PC-9 (cell line): ENCODE measurements at regions of chr1 and their contacts with region 1.

Region 1: GRCh38 chr1:8015036-8015808 is 10.9 kb downstream of the ERRFI1 start:
- DNase-seq: peak; percentile 58 to 72
- H3K4me3 ChIP-seq: peak overlapping the region; percentile 91; the same call in 1 of the 2 replicates
- H3K27ac ChIP-seq: peak overlapping the region; percentile 90
- H3K4me1 ChIP-seq: peaks cover 75% of the 10 kb centered on the region
- H3K27me3 ChIP-seq: no peaks in the 10 kb centered on the region
- CTCF ChIP-seq: peak; percentile 70

Region 2: DNA sequence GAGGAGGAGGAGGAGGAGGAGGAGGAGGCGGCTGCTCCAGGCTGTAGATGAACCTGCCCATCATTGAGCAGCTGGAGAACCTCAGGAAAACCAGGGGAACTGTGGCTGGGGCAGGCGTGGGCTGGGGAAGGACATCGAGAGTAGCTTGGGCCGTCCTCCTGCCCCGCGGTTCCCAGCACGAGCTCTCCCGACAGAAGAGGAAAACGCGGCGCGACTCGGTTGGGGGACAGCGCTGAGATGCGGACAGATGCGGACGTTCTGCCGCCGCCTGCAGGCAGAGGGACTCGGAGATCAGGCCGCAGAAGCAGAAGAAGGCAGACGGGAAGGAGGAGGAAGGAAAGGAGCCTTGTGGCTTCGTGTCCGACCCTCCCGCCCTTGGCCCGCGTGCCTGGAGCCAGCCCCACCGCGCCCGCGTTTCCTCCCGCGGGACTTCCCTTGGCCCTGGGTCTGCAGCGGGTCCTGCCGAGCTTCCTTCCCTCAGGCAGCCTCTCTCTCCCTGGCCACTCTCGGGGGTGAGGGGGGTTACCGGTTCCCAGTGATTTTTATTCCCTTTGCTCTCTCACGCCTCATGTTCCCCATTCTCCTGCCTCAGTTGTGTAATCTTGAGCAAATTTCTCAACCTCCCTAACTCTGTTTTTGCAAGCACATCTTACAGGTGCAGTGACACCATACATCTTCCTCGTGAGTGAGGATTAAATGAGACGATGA is 72.9 kb before region 1 on chr1:
- CTCF ChIA-PET with region 1: no interaction called
- POLR2A ChIA-PET with region 1: no interaction called
- intact Hi-C with region 1: no loop called
- DNase-seq: no peak
- H3K4me3 ChIP-seq: no peak overlapping the region
- H3K27ac ChIP-seq: no peak overlapping the region
- H3K4me1 ChIP-seq: peaks cover 14% of the 10 kb centered on the region
- H3K27me3 ChIP-seq: no peaks in the 10 kb centered on the region
- CTCF ChIP-seq: no peak

Region 3: GRCh38 chr1:8004803-8005554 is 10.2 kb before region 1 on chr1:
- CTCF ChIA-PET with region 1: no interaction called
- POLR2A ChIA-PET with region 1: interaction called, 10 read pairs
- intact Hi-C with region 1: no loop called
- DNase-seq: peak; percentile 70 to 91
- H3K4me3 ChIP-seq: no peak overlapping the region
- H3K27ac ChIP-seq: peak overlapping the region; percentile 83
- H3K4me1 ChIP-seq: peaks cover 31% of the 10 kb centered on the region
- H3K27me3 ChIP-seq: no peaks in the 10 kb centered on the region
- CTCF ChIP-seq: no peak

Region 4: GRCh38 chr1:8040586-8040985 is 25.4 kb after region 1 on chr1:
- CTCF ChIA-PET with region 1: interaction called, 3 read pairs
- POLR2A ChIA-PET with region 1: interaction called, 24 read pairs
- intact Hi-C with region 1: no loop called
- DNase-seq: peak; percentile 82 to 90
- H3K4me3 ChIP-seq: no peak overlapping the region
- H3K27ac ChIP-seq: peak overlapping the region; percentile 76
- H3K4me1 ChIP-seq: peaks cover 32% of the 10 kb centered on the region
- H3K27me3 ChIP-seq: no peaks in the 10 kb centered on the region
- CTCF ChIP-seq: no peak

Region 5: GRCh38 chr1:8113262-8114220 is 98.3 kb after region 1 on chr1:
- CTCF ChIA-PET with region 1: no interaction called
- POLR2A ChIA-PET with region 1: no interaction called
- intact Hi-C with region 1: no loop called
- DNase-seq: no peak
- H3K4me3 ChIP-seq: no peak overlapping the region
- H3K27ac ChIP-seq: no peak overlapping the region
- H3K4me1 ChIP-seq: peaks cover 36% of the 10 kb centered on the region
- H3K27me3 ChIP-seq: no peaks in the 10 kb centered on the region
- CTCF ChIP-seq: no peak

Region 6: GRCh38 chr1:8238851-8239305 is 223.7 kb after region 1 on chr1:
- CTCF ChIA-PET with region 1: interaction called, 5 read pairs
- POLR2A ChIA-PET with region 1: interaction called, 37 read pairs
- intact Hi-C with region 1: no loop called
- DNase-seq: peak; percentile 60 to 87
- H3K4me3 ChIP-seq: no peak overlapping the region
- H3K27ac ChIP-seq: peak overlapping the region; percentile 95
- H3K4me1 ChIP-seq: peaks cover 24% of the 10 kb centered on the region
- H3K27me3 ChIP-seq: no peaks in the 10 kb centered on the region
- CTCF ChIP-seq: no peak; the same call in 1 of the 2 replicates